ENCODE measurements at regions of chr1 and their contacts with region 1.

Region 1: DNA sequence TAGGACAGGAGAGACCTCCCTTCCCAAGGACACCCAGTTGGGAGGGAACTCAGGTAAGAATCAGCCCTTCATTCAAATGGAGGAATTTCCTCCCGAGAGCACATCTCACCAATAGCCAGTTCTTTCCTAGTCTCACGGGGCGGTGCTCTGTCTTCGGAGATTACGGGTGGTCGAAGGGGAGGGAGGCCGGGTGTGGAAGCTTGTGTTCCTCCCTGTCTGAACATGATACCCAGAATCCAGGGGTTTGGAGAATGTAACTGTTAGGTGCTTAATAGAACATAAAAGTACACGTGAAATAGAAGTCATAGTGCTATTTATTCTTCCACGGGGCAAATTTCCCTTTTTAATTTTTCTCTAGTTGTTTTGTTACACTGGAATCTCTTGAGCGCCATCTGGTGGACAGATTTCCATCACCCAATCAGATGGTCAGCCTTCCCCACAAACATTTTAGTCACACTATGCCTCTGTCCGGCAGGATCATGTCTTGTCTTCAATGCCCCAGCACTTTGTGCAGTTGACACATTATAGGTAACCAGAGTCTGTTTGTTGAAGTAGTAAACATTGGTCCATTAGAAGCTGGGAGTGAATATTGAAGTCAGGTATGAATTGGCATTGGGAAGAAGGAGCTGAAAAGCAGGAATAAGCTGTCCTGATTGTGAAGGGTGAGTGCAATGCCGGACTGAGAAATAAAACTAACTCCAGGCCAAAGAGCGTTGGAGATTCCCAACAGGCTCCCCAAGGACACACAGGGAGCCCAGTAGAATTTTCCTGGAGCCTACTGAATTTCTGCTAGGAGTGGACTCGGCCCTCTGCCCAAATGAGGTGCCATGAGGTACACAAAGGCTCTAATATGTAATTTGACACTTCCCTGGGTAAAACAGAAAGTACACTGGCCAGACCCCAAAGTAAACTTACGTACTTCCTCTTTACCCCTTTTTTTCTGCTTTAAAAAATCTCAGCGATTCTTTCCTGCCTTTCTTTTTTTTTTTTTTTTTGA is 27.6 kb upstream of the ZNF697 start:
- DNase-seq: peak in 1 of 2 experiments; percentile 87
- H3K4me3 ChIP-seq: peak overlapping the region; percentile 27 to 55 (median 34); a peak in 5 of 8 replicates
- H3K27ac ChIP-seq: no peak overlapping the region
- H3K4me1 ChIP-seq: peaks cover 5 to 17% (median 12%) of the 10 kb centered on the region in 4 experiments; a peak in 6 of 7 replicates
- H3K27me3 ChIP-seq: no peaks in the 10 kb centered on the region
- CTCF ChIP-seq: peak; percentile 36 to 71 (median 48)
- EP300 ChIP-seq: no peak
- POLR2A ChIP-seq: peak in 1 of 2 experiments; percentile 29; a peak in 1 of 3 replicates
- RAD21 ChIP-seq: peak; percentile 44 to 54

Region 2: DNA sequence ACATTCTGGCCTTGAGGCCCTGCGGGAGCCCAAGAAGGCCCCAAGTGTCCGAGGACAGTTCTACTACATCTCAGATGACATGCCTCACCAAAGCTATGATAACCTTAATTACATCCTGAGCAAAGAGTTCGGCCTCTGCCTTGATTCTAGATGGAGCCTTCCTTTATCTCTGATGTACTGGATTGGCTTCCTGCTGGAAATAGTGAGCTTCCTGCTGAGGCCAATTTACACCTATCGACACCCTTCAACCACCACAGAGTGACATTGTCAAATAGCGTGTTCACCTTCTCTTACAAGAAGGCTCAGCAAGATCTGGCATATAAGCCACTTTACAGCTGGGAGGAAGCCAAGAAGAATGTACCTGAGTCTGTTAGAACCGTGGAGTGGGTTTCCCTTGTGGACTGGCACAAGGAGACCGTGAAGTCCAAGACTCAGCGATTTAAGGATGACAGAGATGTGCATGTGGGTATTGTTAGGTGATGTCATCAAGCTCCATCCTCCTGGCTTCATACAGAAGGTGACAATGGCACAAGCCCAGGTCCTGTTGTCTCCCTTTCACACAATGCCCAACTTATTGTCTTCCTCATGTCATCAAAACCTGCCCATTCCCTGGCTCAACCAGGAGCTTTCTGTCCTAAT is 66.7 kb before region 1 on chr1:
- CTCF ChIA-PET with region 1: interaction called, 97 read pairs
- POLR2A ChIA-PET with region 1: no interaction called
- DNase-seq: no peak
- H3K4me3 ChIP-seq: no peak overlapping the region
- H3K27ac ChIP-seq: no peak overlapping the region
- H3K4me1 ChIP-seq: peaks cover 0 to 2% (median under 1%) of the 10 kb centered on the region in 4 experiments; a peak in 4 of 7 replicates
- H3K27me3 ChIP-seq: no peaks in the 10 kb centered on the region
- CTCF ChIP-seq: no peak
- EP300 ChIP-seq: no peak
- POLR2A ChIP-seq: no peak
- RAD21 ChIP-seq: no peak

Region 3: GRCh38 chr1:119623678-119624077 is 52.0 kb before region 1 on chr1:
- CTCF ChIA-PET with region 1: interaction called, 97 read pairs
- POLR2A ChIA-PET with region 1: interaction called, 3 read pairs
- DNase-seq: no peak
- H3K4me3 ChIP-seq: no peak overlapping the region
- H3K27ac ChIP-seq: no peak overlapping the region
- H3K4me1 ChIP-seq: peaks cover 0 to 9% (median 1%) of the 10 kb centered on the region in 4 experiments; a peak in 3 of 7 replicates
- H3K27me3 ChIP-seq: no peaks in the 10 kb centered on the region
- CTCF ChIP-seq: no peak
- EP300 ChIP-seq: no peak
- POLR2A ChIP-seq: no peak
- RAD21 ChIP-seq: no peak

Region 4: DNA sequence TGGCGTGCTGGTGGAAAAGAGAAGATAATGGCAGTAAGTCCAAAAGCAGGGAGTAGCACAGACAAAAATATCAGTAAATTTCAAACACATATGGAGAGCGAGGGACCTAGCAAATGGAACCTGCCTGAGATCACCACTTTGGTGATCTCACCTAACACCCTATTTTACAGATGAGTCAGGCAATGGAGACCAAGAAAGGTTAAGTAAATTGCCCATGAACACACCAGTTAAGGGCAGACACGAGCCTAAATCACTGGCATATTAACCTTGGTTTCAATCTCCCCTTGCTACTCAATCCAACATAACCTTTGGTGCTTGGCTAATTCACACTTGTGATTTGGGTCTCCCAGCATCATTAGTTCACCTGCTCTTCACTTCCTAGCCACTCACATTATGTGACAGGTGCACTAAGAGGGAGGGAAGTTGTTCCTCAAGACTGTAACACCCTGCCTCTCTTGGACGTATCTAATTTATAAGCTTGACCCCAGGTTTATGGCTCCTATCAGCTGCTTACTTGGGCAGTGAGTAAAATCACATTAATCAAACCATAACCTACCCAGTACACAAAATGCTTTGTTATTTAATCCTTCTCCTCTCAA is 39.1 kb before region 1 on chr1:
- CTCF ChIA-PET with region 1: no interaction called
- POLR2A ChIA-PET with region 1: no interaction called
- DNase-seq: no peak
- H3K4me3 ChIP-seq: no peak overlapping the region
- H3K27ac ChIP-seq: no peak overlapping the region
- H3K4me1 ChIP-seq: peaks cover 0 to 7% (median 5%) of the 10 kb centered on the region in 4 experiments; a peak in 4 of 7 replicates
- H3K27me3 ChIP-seq: no peaks in the 10 kb centered on the region
- CTCF ChIP-seq: no peak
- EP300 ChIP-seq: no peak
- POLR2A ChIP-seq: no peak
- RAD21 ChIP-seq: no peak

Region 5: DNA sequence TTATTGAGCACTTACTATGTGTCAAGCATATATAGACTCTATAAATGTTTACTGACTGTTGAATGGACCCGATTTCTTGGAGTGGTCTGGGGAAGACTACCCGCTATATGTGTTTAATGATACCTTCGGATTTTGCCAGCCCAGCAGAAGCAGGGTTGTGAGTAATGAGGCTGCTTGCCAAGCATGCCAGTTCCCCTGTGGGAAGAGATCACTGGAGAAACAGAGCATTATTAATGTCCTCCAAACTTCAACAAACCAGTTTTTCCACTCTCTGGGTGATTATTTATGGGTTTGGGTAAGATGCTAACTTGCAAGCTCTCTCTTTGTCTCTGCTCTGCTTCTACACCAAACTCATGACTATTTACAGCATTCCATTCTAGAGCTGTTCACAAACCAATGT is 11.0 kb after region 1 on chr1:
- CTCF ChIA-PET with region 1: interaction called, 47 read pairs
- POLR2A ChIA-PET with region 1: interaction called, 36 read pairs
- DNase-seq: no peak
- H3K4me3 ChIP-seq: peak overlapping the region in 1 of 4 experiments; percentile 32; a peak in 1 of 8 replicates
- H3K27ac ChIP-seq: no peak overlapping the region
- H3K4me1 ChIP-seq: peaks cover 0 to 16% (median 10%) of the 10 kb centered on the region in 4 experiments; a peak in 6 of 7 replicates
- H3K27me3 ChIP-seq: no peaks in the 10 kb centered on the region
- CTCF ChIP-seq: no peak
- EP300 ChIP-seq: no peak
- POLR2A ChIP-seq: no peak
- RAD21 ChIP-seq: no peak

Region 6: GRCh38 chr1:119727996-119728395 is 52.3 kb after region 1 on chr1:
- CTCF ChIA-PET with region 1: interaction called, 36 read pairs
- POLR2A ChIA-PET with region 1: interaction called, 6 read pairs
- DNase-seq: no peak
- H3K4me3 ChIP-seq: no peak overlapping the region
- H3K27ac ChIP-seq: no peak overlapping the region
- H3K4me1 ChIP-seq: no peaks in the 10 kb centered on the region
- H3K27me3 ChIP-seq: no peaks in the 10 kb centered on the region
- CTCF ChIP-seq: no peak
- EP300 ChIP-seq: no peak
- POLR2A ChIP-seq: no peak
- RAD21 ChIP-seq: no peak

Measured in H1 (cell line).